ENCODE measurements at regions of chr4 and their contacts with region 1.

Region 1: DNA sequence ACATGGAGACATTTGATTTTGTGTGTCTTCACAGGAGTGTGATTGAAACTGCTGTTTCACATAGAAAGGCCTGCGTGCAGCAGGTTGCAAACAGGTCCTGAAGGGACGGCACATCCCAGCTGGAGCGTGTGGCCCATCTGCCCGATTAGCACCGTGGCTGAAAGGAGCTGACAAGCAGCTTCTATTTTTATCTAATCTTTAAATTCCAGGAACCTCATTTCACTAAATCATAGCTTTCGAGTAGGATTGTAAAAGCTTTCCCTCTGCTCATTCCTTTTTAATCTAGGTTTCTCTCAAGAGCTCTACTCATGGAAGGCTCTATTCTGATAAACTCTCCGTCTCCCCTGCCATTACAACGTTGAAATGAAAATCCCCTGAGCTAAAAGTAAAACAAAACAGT is 106.8 kb downstream of the FSTL5 start:
- DNase-seq: no peak
- H3K4me3 ChIP-seq: no peak overlapping the region
- H3K27ac ChIP-seq: no peak overlapping the region
- H3K4me1 ChIP-seq: no peaks in the 10 kb centered on the region
- H3K27me3 ChIP-seq: no peaks in the 10 kb centered on the region
- CTCF ChIP-seq: no peak
- POLR2A ChIP-seq: no peak

Region 2: GRCh38 chr4:162038112-162038511 is 18.9 kb before region 1 on chr4:
- intact Hi-C with region 1: loop called (anchors 2 kb)
- DNase-seq: no peak
- H3K4me3 ChIP-seq: no peak overlapping the region
- H3K27ac ChIP-seq: no peak overlapping the region
- H3K4me1 ChIP-seq: no peaks in the 10 kb centered on the region
- H3K27me3 ChIP-seq: no peaks in the 10 kb centered on the region
- CTCF ChIP-seq: no peak
- POLR2A ChIP-seq: no peak

Measured in breast epithelium (tissue), 4 donors.